Panc1 (cell line): ENCODE measurements at regions of chr6 and their contacts with region 1.

Region 1: DNA sequence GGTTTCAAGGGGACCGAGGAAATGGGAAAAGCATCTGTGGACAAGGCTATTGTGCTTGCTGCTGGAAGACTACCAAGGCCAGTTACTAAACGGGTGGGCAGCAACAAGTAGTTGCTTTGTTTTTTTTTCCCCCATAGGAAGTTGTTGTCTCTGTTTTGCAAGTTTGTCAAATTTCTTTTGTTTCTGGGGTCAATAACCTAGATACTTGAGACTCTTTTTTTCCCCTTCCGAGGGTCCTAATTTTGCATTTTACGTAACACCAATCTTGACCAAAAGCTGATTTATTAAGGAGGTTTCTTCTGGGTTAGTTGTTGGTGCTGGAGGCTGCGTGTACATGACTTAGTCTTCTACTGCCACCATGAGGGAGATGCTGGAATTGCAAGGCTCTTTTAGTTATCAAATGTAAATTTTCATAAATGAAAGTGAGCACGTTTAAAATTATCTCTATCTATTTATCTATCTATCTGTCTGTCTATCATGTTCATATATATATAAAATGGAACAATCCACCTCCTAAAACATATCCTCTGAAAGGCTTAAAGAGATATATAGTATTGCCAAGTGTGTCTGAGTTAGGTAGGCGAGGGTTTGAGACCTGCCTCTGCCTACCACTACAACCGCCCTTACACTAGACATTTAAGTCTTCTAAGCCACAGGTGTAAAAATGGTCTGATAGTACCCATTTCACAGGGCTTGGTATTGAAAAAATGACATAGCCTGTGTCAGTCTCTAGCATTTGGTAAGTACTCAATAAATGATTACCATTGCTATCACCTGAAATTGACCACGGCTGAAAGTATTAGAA is 60.2 kb downstream of the GCLC start:
- DNase-seq: peak; percentile 54
- ATAC-seq: peak; percentile 84
- H3K4me3 ChIP-seq: no peak overlapping the region
- H3K27ac ChIP-seq: no peak overlapping the region
- H3K4me1 ChIP-seq: no peaks in the 10 kb centered on the region; the same call in 1 of the 2 replicates
- H3K27me3 ChIP-seq: peaks cover 13% of the 10 kb centered on the region; the same call in 1 of the 2 replicates
- CTCF ChIP-seq: peak; percentile 89

Region 2: GRCh38 chr6:53103992-53104675 is 380.5 kb before region 1 on chr6:
- CTCF ChIA-PET with region 1: interaction called, 3 read pairs
- POLR2A ChIA-PET with region 1: no interaction called
- in situ Hi-C with region 1: no loop called
- intact Hi-C with region 1: loop called (anchors 1 kb)
- DNase-seq: peak; percentile 13
- ATAC-seq: peak; percentile 72; the same call in 1 of the 2 replicates
- H3K4me3 ChIP-seq: no peak overlapping the region
- H3K27ac ChIP-seq: no peak overlapping the region
- H3K4me1 ChIP-seq: no peaks in the 10 kb centered on the region
- H3K27me3 ChIP-seq: no peaks in the 10 kb centered on the region
- CTCF ChIP-seq: peak; percentile 52